Activated naive CD4-positive, alpha-beta T cell treated with anti-CD3 and anti-CD28 coated beads for 36 hours (primary cell): ENCODE measurements at regions of chr6 and their contacts with region 1.

Region 1: DNA sequence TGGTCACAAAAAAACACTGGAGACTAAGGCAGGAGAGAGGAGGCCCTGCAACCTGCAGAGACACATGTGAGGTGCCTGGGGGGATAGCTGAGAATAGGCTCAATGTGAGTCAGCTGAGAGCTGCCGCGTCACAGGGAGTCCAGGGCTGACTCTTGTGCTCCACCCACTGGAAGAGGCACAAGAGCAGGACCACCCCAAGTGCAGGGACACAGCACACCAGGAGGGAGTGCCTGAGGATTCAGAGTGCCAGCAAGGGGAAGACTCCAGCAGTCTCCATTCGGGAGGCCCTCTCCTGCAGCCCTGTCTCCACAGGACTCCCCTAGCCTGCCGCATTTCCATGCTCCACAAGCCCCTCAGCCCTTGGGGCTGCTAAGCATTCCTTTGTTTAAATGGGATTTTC is 105.5 kb downstream of the HUS1B start:
- DNase-seq: peak; percentile 56
- H3K4me3 Mint-ChIP-seq: no peak overlapping the region
- H3K27ac Mint-ChIP-seq: peak overlapping the region; percentile 79
- H3K4me1 Mint-ChIP-seq: peaks cover 57% of the 10 kb centered on the region
- H3K27me3 Mint-ChIP-seq: no peaks in the 10 kb centered on the region

Region 2: DNA sequence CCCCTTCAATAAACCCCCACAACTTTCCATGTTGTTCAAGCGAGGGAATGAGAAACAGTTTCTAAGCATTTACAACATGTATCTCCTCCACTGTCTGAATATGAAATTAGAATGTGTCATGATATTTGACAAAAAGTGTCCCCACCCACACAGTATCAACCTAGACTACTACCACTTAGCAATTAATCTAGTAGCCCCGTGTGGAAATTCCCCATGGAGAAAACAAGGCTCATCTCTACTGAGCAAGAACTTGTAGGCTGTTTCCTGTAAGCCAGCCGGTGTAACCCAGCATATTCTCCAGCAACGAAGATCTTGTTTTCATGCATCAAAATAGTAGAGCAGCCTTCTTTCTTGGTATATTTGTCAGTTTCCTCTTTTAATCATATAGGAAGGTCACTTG is 44.9 kb before region 1 on chr6:
- CTCF ChIA-PET with region 1: no interaction called
- intact Hi-C with region 1: loop called (anchors 1 kb)
- DNase-seq: peak; percentile 89
- H3K4me3 Mint-ChIP-seq: peak overlapping the region; percentile 45
- H3K27ac Mint-ChIP-seq: peak overlapping the region; percentile 99
- H3K4me1 Mint-ChIP-seq: peaks cover 95% of the 10 kb centered on the region
- H3K27me3 Mint-ChIP-seq: no peaks in the 10 kb centered on the region

Region 3: DNA sequence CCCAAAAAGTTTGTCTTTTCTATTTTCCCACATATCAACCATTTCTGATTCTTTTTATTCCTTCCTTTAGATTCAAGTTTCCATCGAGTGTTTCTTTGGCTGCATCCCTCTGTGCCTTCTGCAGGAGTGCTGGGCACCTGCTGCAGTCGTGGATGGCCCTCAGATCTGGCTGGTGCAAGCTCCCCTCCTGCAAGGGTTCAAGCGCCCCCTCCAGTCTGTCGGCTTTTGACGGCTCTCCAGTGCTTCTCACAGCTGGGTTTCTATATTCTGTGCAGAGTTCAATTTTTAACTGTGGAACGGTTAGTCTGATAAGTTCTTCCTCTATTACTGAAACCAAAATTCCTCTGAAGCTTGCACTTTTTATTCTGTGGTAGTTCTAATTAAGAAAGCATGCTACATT is 26.6 kb before region 1 on chr6:
- CTCF ChIA-PET with region 1: no interaction called
- intact Hi-C with region 1: loop called (anchors 1 kb)
- DNase-seq: peak; percentile 75
- H3K4me3 Mint-ChIP-seq: peak overlapping the region; percentile 11
- H3K27ac Mint-ChIP-seq: peak overlapping the region; percentile 18
- H3K4me1 Mint-ChIP-seq: peaks cover 25% of the 10 kb centered on the region
- H3K27me3 Mint-ChIP-seq: no peaks in the 10 kb centered on the region

Region 4: GRCh38 chr6:617445-618100 is 66.2 kb after region 1 on chr6:
- CTCF ChIA-PET with region 1: no interaction called
- intact Hi-C with region 1: no loop called
- DNase-seq: peak; percentile 25
- H3K4me3 Mint-ChIP-seq: no peak overlapping the region
- H3K27ac Mint-ChIP-seq: no peak overlapping the region
- H3K4me1 Mint-ChIP-seq: no peaks in the 10 kb centered on the region
- H3K27me3 Mint-ChIP-seq: no peaks in the 10 kb centered on the region